HepG2 (cell line): ENCODE measurements at regions of chr14 and their contacts with region 1.

Region 1: DNA sequence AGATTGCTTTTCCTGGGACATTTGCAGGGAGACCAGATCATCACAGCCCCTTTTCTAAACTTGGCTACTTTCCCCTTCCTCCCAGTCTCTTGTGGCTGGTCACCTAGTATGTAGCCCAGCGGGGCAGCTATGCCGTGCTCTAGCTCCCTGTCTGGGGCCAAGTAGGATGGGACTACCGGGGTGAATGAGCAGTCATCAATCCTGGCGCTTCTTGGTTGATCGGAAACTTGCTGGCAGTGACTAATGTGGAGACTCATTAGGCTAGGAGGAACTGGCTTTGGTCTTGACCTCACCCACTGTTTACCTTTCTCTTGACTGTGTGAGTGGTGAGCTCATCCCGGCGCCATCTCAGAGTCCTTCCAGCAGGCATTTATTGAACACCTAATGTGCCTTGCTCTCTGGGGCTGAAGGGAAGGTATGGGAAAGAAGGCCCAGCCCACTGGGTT is 15.9 kb downstream of the PLEKHG3 start:
- DNase-seq: peak; percentile 67
- ATAC-seq: peak; percentile 81
- H3K4me3 ChIP-seq: no peak overlapping the region
- H3K27ac ChIP-seq: no peak overlapping the region
- H3K4me1 ChIP-seq: peaks cover 55% of the 10 kb centered on the region
- H3K27me3 ChIP-seq: no peaks in the 10 kb centered on the region
- CTCF ChIP-seq: no peak
- EP300 ChIP-seq: 0 out of 4 replicates have a peak, but pooled peaks of 1 of the 2 experiments have one; percentile 5
- POLR2A ChIP-seq: no peak
- RAD21 ChIP-seq: no peak

Region 2: GRCh38 chr14:64704143-64704742 is 15.9 kb before region 1 on chr14 and contains the start of gene PLEKHG3:
- CTCF ChIA-PET with region 1: no interaction called
- POLR2A ChIA-PET with region 1: interaction called, 14 read pairs
- in situ Hi-C with region 1: no loop called
- intact Hi-C with region 1: loop called (anchors 1 kb)
- DNase-seq: peak; percentile 59
- ATAC-seq: peak; percentile 77
- H3K4me3 ChIP-seq: peak within 1 kb of the TSS; percentile 63 to 79 (median 73)
- H3K27ac ChIP-seq: no peak within 1 kb of the TSS
- H3K4me1 ChIP-seq: peaks cover 58% of the 10 kb centered on the region
- H3K27me3 ChIP-seq: peaks cover 0 to 24% of the 10 kb centered on the region in 2 experiments; a peak in 4 of 5 replicates
- CTCF ChIP-seq: no peak
- EP300 ChIP-seq: no peak
- POLR2A ChIP-seq: no peak; a peak in 1 of 4 replicates
- RAD21 ChIP-seq: no peak
- total RNA-seq, gene PLEKHG3: 9.5 and 9.8 TPM in 2 replicates